Esophagus muscularis mucosa (tissue), 4 donors: ENCODE measurements at regions of chr11 and their contacts with region 1.

Region 1: GRCh38 chr11:85086547-85087276 is 540.4 kb downstream of the DLG2 start:
- DNase-seq: no peak
- H3K4me3 ChIP-seq: no peak overlapping the region
- H3K27ac ChIP-seq: no peak overlapping the region
- H3K4me1 ChIP-seq: no peaks in the 10 kb centered on the region
- H3K27me3 ChIP-seq: no peaks in the 10 kb centered on the region
- CTCF ChIP-seq: no peak
- EP300 ChIP-seq: no peak
- POLR2A ChIP-seq: no peak

Region 2: GRCh38 chr11:85098996-85099395 is 12.3 kb after region 1 on chr11:
- intact Hi-C with region 1: loop called (anchors 2 kb)
- DNase-seq: no peak
- H3K4me3 ChIP-seq: no peak overlapping the region
- H3K27ac ChIP-seq: no peak overlapping the region
- H3K4me1 ChIP-seq: peaks cover 0 to 12% (median 7%) of the 10 kb centered on the region in 4 donors
- H3K27me3 ChIP-seq: no peaks in the 10 kb centered on the region
- CTCF ChIP-seq: no peak
- EP300 ChIP-seq: no peak
- POLR2A ChIP-seq: no peak